GM12878 (cell line): ENCODE measurements at regions of chr16 and their contacts with region 1.

Region 1: DNA sequence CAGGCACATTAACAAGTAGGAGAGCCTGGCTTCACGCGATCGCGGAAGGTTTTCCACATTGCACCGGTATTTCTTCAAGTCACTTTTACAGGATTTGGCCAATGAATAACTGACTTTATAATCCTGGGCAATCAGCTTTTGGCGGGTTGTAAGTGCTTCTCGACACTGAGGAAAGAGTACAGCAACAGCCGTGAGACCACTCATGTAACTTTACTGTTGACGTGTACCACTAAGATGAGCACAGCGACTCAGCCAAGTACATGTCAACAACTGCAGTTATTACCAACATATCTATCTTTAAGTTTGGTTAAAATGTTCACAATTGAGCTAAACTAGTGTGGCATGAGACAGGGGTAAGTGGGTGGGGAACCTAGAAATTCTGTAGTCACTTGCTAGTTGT is 71.7 kb upstream of the CLEC18B start:
- DNase-seq: no peak
- ATAC-seq: no peak
- H3K4me3 ChIP-seq: no peak overlapping the region
- H3K27ac ChIP-seq: no peak overlapping the region
- H3K4me1 ChIP-seq: no peaks in the 10 kb centered on the region
- H3K27me3 ChIP-seq: no peaks in the 10 kb centered on the region
- CTCF ChIP-seq: no peak
- EP300 ChIP-seq: no peak
- POLR2A ChIP-seq: no peak
- RAD21 ChIP-seq: no peak

Region 2: DNA sequence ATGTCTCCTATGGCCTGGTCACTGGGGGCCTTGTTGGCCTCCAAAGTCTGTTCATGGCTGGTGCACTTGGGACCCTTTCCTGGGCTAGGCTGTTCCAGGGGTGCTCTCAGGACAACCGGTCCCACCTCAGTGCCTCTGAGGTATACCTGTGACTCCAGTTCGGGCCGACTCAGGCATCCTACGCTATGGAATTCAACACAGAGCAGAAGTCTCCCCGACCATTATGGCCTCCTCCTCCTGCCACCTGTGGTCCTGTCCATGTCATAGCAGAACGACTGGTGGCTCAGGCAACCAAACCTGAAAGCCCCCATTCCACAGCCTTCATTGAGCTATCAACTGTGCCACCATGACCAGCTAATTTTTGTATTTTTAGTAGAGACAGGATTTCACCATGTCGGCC is 204.9 kb before region 1 on chr16:
- CTCF ChIA-PET with region 1: no interaction called
- POLR2A ChIA-PET with region 1: no interaction called
- RAD21 ChIA-PET with region 1: no interaction called
- SMC1A ChIA-PET with region 1: no interaction called
- in situ Hi-C with region 1: no loop called
- intact Hi-C with region 1: no loop called
- DNase-seq: no peak
- ATAC-seq: no peak
- H3K4me3 ChIP-seq: no peak overlapping the region
- H3K27ac ChIP-seq: no peak overlapping the region
- H3K4me1 ChIP-seq: no peaks in the 10 kb centered on the region
- H3K27me3 ChIP-seq: no peaks in the 10 kb centered on the region
- CTCF ChIP-seq: no peak
- EP300 ChIP-seq: no peak
- POLR2A ChIP-seq: no peak
- RAD21 ChIP-seq: no peak

Region 3: DNA sequence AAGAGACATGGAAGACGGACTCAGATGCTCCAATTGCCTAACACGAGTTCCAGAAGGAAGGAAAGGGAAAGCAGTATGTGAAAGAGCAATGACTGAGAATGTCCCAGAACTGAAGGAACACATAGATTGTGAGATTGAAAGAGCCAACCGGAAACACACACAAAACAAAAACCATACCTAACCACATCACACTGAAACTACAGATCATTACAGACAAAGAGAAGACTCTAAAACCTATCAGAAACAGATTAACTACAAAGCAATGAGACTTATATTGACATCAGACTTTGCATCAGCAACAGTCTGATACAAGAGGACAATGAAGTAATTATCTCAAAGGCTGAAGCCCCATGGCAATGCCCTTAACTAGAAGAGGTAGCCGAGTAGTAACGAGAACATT is 26.1 kb before region 1 on chr16:
- CTCF ChIA-PET with region 1: no interaction called
- POLR2A ChIA-PET with region 1: no interaction called
- RAD21 ChIA-PET with region 1: no interaction called
- SMC1A ChIA-PET with region 1: no interaction called
- in situ Hi-C with region 1: no loop called
- intact Hi-C with region 1: no loop called
- DNase-seq: no peak
- ATAC-seq: peak; percentile 78
- H3K4me3 ChIP-seq: no peak overlapping the region
- H3K27ac ChIP-seq: no peak overlapping the region
- H3K4me1 ChIP-seq: peaks cover 19% of the 10 kb centered on the region
- H3K27me3 ChIP-seq: no peaks in the 10 kb centered on the region
- CTCF ChIP-seq: no peak
- EP300 ChIP-seq: no peak
- POLR2A ChIP-seq: no peak
- RAD21 ChIP-seq: no peak

Region 4: DNA sequence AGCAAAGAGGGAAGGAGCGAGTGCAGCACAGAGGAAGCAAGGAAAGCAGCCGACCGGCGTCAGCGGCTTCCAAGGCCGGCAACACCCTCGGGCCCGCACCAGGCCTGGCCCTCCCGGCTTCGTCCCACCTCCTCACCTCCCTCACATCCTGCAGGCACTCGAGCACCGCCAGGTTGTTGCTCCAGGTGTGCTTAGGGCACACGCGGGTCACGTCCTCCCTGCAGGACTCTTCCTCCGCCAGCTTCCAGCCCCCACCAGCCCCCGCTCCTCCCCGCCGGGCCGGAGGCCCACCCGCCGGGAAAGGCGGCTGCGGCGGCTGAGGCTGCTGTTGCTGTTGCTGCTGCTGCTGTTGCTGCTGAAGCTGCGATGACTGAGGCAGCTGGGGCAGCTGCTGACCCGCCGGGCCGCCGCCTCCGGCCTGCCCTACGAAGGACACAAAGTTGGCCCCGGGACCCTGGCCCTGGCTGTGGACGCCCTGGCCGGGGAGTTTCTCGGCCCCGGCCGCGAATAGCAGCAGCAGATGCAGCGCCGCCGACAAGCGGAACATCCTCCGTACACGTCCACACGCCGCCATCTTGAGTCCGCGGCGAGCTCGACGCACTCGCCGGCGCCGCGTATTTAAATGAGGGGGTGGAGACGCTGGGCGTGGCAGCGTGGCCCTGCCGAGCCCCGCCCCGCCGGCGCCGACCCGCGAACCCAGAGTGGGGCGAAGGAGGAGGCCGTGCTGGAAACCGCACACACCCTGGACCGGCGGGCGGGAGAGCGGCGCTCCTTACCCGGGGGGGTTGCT is 113.7 kb after region 1 on chr16 and contains the start of gene GLG1:
- CTCF ChIA-PET with region 1: no interaction called
- POLR2A ChIA-PET with region 1: no interaction called
- RAD21 ChIA-PET with region 1: interaction called, 3 read pairs
- SMC1A ChIA-PET with region 1: interaction called, 3 read pairs
- in situ Hi-C with region 1: no loop called
- intact Hi-C with region 1: loop called (anchors 10 kb)
- DNase-seq: peak; percentile 51
- ATAC-seq: peak; percentile 95
- H3K4me3 ChIP-seq: peak within 1 kb of the TSS; percentile 93
- H3K27ac ChIP-seq: peak within 1 kb of the TSS; percentile 83
- H3K4me1 ChIP-seq: peaks cover 2% of the 10 kb centered on the region; the same call in 1 of the 2 replicates
- H3K27me3 ChIP-seq: no peaks in the 10 kb centered on the region
- CTCF ChIP-seq: peak in 1 of 3 experiments; percentile 22; a peak in 1 of 6 replicates
- EP300 ChIP-seq: no peak
- POLR2A ChIP-seq: peak; percentile 99
- RAD21 ChIP-seq: no peak
- polyA plus RNA-seq, gene GLG1: 7.6 to 9.6 TPM

Region 5: DNA sequence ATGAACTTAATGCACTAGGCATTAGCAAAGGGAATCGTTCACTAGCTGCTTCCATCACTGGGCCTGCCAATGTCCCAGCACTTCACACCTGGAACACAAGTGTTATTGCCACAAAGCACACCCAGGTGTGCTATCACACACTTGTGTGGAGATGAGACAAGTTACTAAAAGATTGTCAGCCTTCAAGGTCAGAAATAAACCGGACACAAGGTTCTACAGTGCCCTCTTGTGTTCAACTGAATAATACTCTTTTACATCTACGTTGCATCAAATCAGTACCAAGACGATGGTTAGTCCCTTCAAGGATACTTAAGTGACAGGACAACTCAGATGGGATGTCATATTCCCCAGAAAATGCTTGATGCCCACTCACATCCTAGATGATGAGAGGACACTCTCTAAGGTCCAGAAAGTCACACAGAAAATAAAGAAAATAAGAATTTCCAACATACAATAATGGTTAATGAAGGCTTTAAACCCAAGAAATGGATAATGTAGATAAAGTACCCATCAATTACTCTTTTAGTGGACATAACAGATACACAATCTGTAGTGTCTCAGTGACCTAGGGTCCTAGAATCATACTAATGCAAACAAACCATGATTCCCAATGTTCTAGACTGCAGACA is 130.4 kb after region 1 on chr16:
- CTCF ChIA-PET with region 1: interaction called, 3 read pairs
- POLR2A ChIA-PET with region 1: no interaction called
- RAD21 ChIA-PET with region 1: interaction called, 4 read pairs
- SMC1A ChIA-PET with region 1: interaction called, 3 read pairs
- in situ Hi-C with region 1: no loop called
- intact Hi-C with region 1: loop called (anchors 2 kb)
- DNase-seq: no peak
- ATAC-seq: peak; percentile 76
- H3K4me3 ChIP-seq: no peak overlapping the region
- H3K27ac ChIP-seq: no peak overlapping the region
- H3K4me1 ChIP-seq: peaks cover 8% of the 10 kb centered on the region
- H3K27me3 ChIP-seq: no peaks in the 10 kb centered on the region
- CTCF ChIP-seq: peak; percentile 48 to 71 (median 68)
- EP300 ChIP-seq: no peak
- POLR2A ChIP-seq: no peak
- RAD21 ChIP-seq: peak; percentile 75